ENCODE measurements at regions of chr11 and their contacts with region 1.

Region 1: DNA sequence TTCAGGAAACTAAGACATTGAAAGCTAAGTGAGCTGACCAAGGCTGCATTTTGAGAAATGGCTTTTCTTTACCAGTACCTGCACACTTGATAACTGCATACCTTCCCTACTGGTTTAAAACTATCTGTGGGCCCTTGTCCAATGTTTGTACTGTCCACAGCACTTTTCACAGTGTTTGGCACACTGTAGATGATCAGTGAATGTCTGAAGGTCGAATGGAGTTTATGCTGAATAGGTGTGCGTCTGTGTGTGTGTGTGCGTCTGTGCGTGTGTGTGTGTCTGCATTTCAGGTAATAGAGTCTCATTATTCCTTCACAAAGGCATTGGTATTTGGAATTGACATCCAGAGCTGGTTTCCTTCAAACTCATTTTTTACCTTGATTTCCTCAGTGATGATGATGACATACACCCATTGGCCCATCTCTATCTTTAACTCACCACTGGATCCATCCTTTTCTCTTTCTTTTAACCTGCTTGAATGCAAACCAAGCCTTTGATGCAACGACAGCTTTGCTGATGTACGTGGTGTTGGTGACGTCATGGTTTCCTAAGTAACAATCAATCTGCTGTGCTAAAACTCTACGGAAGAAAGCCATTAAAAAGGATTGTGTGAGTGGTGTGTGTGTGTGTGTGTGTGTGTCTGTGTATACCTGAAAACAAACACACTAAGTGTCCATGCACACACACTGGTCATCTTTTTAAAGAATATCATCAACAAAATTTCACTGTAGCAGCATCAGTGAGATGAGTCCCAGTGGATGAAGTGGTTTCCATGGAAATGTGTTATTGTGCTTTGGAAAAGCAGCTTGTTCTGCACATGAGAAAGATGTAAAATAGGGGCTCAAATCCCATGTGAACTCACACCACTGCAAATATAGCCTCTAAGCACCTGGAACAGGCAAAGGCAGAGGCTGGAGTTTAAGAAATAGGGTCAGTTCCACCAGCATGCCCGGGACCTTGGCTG is 490.2 kb upstream of the B3GAT1 start:
- DNase-seq: no peak
- H3K4me3 ChIP-seq: no peak overlapping the region
- H3K27ac ChIP-seq: no peak overlapping the region
- H3K4me1 ChIP-seq: no peaks in the 10 kb centered on the region
- H3K27me3 ChIP-seq: peaks cover 0 to 3% of the 10 kb centered on the region in 2 donors
- CTCF ChIP-seq: no peak
- POLR2A ChIP-seq: no peak

Region 2: GRCh38 chr11:133745791-133746190 is 1156.4 kb before region 1 on chr11:
- intact Hi-C with region 1: loop called (anchors 5 kb)
- DNase-seq: no peak
- H3K4me3 ChIP-seq: no peak overlapping the region
- H3K27ac ChIP-seq: no peak overlapping the region
- H3K4me1 ChIP-seq: no peaks in the 10 kb centered on the region
- H3K27me3 ChIP-seq: peaks cover 0 to 15% of the 10 kb centered on the region in 2 donors
- CTCF ChIP-seq: no peak
- POLR2A ChIP-seq: no peak

Region 3: DNA sequence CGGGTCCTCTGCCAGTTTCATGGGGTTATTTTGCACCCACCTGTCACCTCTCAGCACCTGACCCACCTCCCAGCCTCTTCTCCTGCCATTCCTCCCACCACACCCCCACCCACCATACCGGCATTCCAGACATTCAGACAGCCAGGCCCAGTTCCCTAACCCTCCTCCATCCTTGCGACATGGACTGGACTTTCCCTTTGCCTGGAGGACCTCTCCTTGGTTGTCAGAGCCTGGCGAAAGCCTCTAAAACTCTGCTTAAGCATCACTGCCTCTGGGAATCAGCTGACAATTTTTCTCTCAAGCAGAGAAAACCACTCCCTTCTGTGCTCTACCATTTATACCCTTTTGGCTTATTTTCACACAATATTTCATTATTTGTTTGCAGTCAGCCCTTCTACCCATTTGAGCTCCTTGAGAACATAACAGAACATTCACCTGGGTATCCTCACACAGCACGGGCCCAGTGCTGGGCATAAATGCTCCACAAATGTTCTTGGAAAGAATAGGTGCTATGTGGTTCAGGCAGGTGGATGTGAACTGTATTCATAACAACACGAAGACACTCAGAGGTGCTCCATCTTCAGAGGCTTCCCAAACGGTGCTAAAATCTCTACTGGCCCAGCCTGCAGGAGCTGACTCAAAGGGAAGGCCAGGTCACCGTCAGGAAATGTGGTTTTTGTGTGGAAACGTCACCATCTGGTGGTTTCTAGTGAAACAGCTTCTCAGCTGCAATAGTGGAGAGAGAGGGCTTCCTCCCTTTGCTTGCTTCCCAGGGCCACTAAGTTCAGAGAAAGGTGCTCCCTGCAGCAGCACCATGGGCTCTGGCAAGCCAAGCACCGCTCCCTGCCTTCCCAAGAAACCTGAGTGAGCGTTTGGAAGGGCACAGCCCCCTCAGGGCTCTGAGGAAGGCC is 1067.3 kb before region 1 on chr11:
- intact Hi-C with region 1: no loop called
- DNase-seq: peak in 1 of 2 donors; percentile 33
- H3K4me3 ChIP-seq: no peak overlapping the region
- H3K27ac ChIP-seq: no peak overlapping the region
- H3K4me1 ChIP-seq: no peaks in the 10 kb centered on the region
- H3K27me3 ChIP-seq: peaks cover 0 to 36% of the 10 kb centered on the region in 2 donors
- CTCF ChIP-seq: peak in 2 of 3 donors; percentile 27 to 63
- POLR2A ChIP-seq: no peak

Region 4: DNA sequence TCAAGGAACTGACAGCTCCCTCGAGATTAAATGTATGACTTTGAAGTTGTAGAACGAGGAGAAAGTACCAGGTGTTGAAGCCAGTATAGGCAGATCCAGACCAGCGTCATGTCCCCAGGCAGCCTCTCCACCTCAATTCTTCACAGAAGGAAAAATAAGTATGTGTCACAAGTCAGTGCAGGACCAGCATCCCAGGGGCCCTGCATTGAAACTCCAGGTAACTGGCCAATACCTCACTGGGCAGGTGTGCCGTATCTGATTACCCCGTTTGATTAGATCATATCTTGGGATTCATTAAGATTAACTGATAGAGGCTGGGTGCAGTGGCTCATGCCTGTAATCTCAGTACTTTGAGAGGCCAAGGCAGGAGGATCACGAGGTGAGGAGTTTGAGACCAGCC is 23.5 kb before region 1 on chr11:
- intact Hi-C with region 1: no loop called
- DNase-seq: no peak
- H3K4me3 ChIP-seq: no peak overlapping the region
- H3K27ac ChIP-seq: no peak overlapping the region
- H3K4me1 ChIP-seq: no peaks in the 10 kb centered on the region
- H3K27me3 ChIP-seq: peaks cover 0 to 8% of the 10 kb centered on the region in 2 donors
- CTCF ChIP-seq: no peak
- POLR2A ChIP-seq: no peak